Activated T-helper 2 cell treated with anti-CD3 and anti-CD28 coated beads, Interferon-gamma antibody, Interleukin-2, Interleukin-4, amounts not matched to agents 10 μg/mL and 5 μg/mL and 100 μg/mL, durations not matched to agents 14 hours and 24 hours and 36 hours (primary cell): ENCODE measurements at regions of chr6 and their contacts with region 1.

Region 1: DNA sequence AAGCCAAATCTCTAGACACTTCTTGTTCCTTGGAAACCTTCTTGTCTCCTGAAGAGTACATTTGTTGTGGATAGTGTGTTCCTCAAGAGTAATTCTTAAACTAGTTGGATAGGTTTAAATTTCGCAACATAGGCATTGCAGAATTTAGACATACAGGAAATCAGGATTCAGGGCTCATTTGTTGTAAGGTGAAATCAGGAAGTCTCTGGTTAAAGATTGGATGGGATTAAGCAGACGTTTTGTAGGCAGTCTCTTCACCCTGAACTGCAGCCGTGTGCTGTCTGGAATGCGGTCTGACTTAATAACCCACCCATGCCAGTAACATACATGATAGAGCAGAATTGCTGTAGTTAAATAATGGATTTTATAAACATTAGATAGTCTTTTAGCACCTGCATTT is 21.7 kb downstream of the HIVEP1 start:
- DNase-seq: no peak
- H3K4me3 Mint-ChIP-seq: no peak overlapping the region
- H3K27ac Mint-ChIP-seq: no peak overlapping the region
- H3K4me1 Mint-ChIP-seq: peaks cover 50% of the 10 kb centered on the region
- H3K27me3 Mint-ChIP-seq: no peaks in the 10 kb centered on the region

Region 2: GRCh38 chr6:12017263-12017662 is 16.5 kb before region 1 on chr6:
- intact Hi-C with region 1: loop called (anchors 2 kb)
- DNase-seq: no peak
- H3K4me3 Mint-ChIP-seq: no peak overlapping the region
- H3K27ac Mint-ChIP-seq: no peak overlapping the region
- H3K4me1 Mint-ChIP-seq: peaks cover 50% of the 10 kb centered on the region
- H3K27me3 Mint-ChIP-seq: no peaks in the 10 kb centered on the region